A673 (cell line): ENCODE measurements at regions of chr6 and their contacts with region 1.

Region 1: GRCh38 chr6:51531623-51532022 is 555.8 kb downstream of the PKHD1 start:
- DNase-seq: peak; percentile 43
- H3K4me3 ChIP-seq: no peak overlapping the region
- H3K27ac ChIP-seq: no peak overlapping the region
- H3K4me1 ChIP-seq: no peaks in the 10 kb centered on the region
- H3K27me3 ChIP-seq: no peaks in the 10 kb centered on the region
- CTCF ChIP-seq: peak; percentile 44

Region 2: GRCh38 chr6:50889497-50889896 is 642.1 kb before region 1 on chr6:
- CTCF ChIA-PET with region 1: no interaction called
- POLR2A ChIA-PET with region 1: no interaction called
- intact Hi-C with region 1: no loop called
- DNase-seq: no peak
- H3K4me3 ChIP-seq: no peak overlapping the region
- H3K27ac ChIP-seq: no peak overlapping the region
- H3K4me1 ChIP-seq: no peaks in the 10 kb centered on the region
- H3K27me3 ChIP-seq: no peaks in the 10 kb centered on the region
- CTCF ChIP-seq: no peak

Region 3: GRCh38 chr6:51505434-51505833 is 26.2 kb before region 1 on chr6:
- CTCF ChIA-PET with region 1: no interaction called
- POLR2A ChIA-PET with region 1: no interaction called
- intact Hi-C with region 1: no loop called
- DNase-seq: no peak
- H3K4me3 ChIP-seq: no peak overlapping the region
- H3K27ac ChIP-seq: no peak overlapping the region
- H3K4me1 ChIP-seq: no peaks in the 10 kb centered on the region
- H3K27me3 ChIP-seq: no peaks in the 10 kb centered on the region
- CTCF ChIP-seq: no peak

Region 4: GRCh38 chr6:51844336-51844735 is 312.7 kb after region 1 on chr6:
- CTCF ChIA-PET with region 1: no interaction called
- POLR2A ChIA-PET with region 1: no interaction called
- intact Hi-C with region 1: loop called (anchors 10 kb)
- DNase-seq: peak; percentile 76
- H3K4me3 ChIP-seq: no peak overlapping the region
- H3K27ac ChIP-seq: no peak overlapping the region
- H3K4me1 ChIP-seq: peaks cover 11% of the 10 kb centered on the region
- H3K27me3 ChIP-seq: peaks cover 11% of the 10 kb centered on the region
- CTCF ChIP-seq: peak; percentile 62

Region 5: DNA sequence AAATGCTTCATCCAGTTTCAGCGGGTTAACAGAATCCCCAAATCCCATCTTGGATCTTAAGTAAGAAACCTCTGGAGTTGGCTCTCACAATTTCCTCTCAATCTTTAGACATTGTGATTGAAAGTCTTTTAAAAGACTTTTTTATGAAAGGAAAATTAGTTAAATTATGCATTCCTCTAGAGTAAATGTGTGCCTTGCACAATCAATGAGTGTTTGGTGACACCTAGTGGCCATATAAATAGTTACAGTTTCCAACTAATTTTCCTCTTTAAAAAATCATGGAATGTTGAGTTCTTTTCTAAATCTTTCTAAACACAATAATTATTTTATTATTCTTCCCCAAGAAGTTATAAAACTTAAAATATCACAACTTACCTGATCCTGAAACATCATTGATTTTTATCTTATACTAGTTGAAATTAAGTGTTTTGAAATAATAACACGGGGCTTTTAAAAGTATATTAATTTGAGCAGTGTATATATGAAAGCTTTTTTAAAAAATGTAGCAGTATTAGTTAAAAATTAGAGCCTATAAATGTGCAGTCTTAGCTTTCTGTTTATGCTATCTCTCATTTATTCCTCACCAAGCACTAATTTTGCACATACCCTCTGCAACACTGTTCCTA is 489.4 kb after region 1 on chr6:
- CTCF ChIA-PET with region 1: no interaction called
- POLR2A ChIA-PET with region 1: no interaction called
- intact Hi-C with region 1: loop called (anchors 5 kb)
- DNase-seq: peak; percentile 55
- H3K4me3 ChIP-seq: no peak overlapping the region
- H3K27ac ChIP-seq: no peak overlapping the region
- H3K4me1 ChIP-seq: no peaks in the 10 kb centered on the region
- H3K27me3 ChIP-seq: no peaks in the 10 kb centered on the region
- CTCF ChIP-seq: peak; percentile 80

Region 6: DNA sequence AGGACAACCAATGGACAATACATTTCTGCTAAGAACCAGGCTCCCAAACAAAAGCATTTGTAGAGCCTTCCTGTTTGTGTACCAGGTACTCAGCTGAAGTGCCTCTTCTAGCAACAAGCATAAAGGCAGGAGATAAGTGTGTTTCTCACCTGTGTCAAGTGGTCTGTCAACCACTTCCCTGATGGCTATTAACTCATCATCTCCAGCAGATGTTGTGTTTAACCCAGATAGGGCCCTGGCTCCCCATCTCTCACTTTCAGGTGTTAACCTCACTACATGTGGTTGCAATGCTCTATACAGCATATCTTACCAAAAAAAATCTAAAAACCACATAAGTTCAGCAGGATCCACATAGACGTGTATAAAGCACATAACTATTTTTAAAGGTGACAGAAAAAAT is 644.9 kb after region 1 on chr6:
- CTCF ChIA-PET with region 1: no interaction called
- POLR2A ChIA-PET with region 1: no interaction called
- intact Hi-C with region 1: no loop called
- DNase-seq: no peak
- H3K4me3 ChIP-seq: no peak overlapping the region
- H3K27ac ChIP-seq: no peak overlapping the region
- H3K4me1 ChIP-seq: no peaks in the 10 kb centered on the region
- H3K27me3 ChIP-seq: no peaks in the 10 kb centered on the region
- CTCF ChIP-seq: no peak